Posterior cingulate gyrus (tissue), 11 donors: ENCODE measurements at regions of chr3 and their contacts with region 1.

Region 1: GRCh38 chr3:185176750-185177359 is 24.0 kb upstream of the C3orf70 start:
- DNase-seq: peak in 5 of 10 donors; percentile 14 to 63 (median 33)

Region 2: GRCh38 chr3:185153962-185154629 is 22.8 kb before region 1 on chr3:
- intact Hi-C with region 1: loop called (anchors 2 kb)
- DNase-seq: peak in 8 of 10 donors; percentile 18 to 90 (median 41)